ENCODE measurements at regions of chr10 and their contacts with region 1.

Region 1: DNA sequence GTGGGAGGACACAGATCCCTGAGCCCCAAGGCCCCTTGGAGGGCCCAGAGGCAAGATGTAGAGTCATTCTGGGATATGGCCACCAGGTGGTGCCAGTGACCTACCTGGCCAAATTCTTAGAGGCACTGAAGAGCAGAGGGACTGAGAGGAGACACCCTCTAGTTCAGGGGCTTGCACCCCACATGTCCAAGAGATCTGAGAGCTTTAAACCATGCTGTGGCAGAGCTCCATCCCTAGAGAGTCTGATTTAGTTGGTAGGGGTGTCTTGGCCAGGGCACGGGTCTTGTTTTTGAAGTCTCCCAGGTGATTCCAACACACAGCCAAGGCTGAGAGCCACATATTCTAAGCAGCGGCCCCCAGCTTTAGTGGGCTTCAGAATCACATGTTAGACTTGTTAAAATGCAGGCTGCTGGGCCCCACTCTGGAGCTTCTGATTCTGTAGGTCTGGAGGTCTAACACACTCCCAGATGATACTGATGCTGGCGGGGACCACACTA is 52.5 kb downstream of the PRF1 start:
- DNase-seq: peak; percentile 62
- H3K4me3 ChIP-seq: no peak overlapping the region
- H3K27ac ChIP-seq: no peak overlapping the region
- H3K4me1 ChIP-seq: peaks cover 21% of the 10 kb centered on the region
- H3K27me3 ChIP-seq: no peaks in the 10 kb centered on the region
- CTCF ChIP-seq: peak; percentile 95

Region 2: GRCh38 chr10:70664702-70665195 is 114.7 kb after region 1 on chr10:
- intact Hi-C with region 1: no loop called
- DNase-seq: no peak
- H3K4me3 ChIP-seq: no peak overlapping the region
- H3K27ac ChIP-seq: no peak overlapping the region
- H3K4me1 ChIP-seq: peaks cover 8% of the 10 kb centered on the region
- H3K27me3 ChIP-seq: no peaks in the 10 kb centered on the region
- CTCF ChIP-seq: no peak

Region 3: DNA sequence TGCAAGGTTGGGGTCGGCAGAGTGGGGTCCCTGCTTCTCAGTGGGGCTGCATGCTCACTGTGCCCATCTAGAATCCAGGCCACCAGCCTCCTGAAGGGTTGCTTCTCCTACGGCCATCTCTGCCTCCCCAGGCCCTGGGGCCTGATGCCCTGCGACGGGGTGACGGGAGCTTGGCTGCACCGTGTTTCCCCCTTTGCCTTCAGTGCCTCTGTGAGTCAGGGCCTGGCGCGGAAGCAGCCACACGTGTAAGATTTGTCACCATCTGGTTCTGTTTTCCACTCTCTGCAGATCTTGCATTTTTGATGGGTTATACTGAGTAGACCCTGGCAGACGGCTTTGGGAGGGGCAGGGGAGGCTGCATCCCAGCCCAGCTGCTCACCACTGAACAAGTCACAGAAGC is 129.5 kb after region 1 on chr10:
- intact Hi-C with region 1: no loop called
- DNase-seq: peak; percentile 58
- H3K4me3 ChIP-seq: no peak overlapping the region
- H3K27ac ChIP-seq: no peak overlapping the region
- H3K4me1 ChIP-seq: peaks cover 20% of the 10 kb centered on the region
- H3K27me3 ChIP-seq: no peaks in the 10 kb centered on the region
- CTCF ChIP-seq: no peak

Region 4: DNA sequence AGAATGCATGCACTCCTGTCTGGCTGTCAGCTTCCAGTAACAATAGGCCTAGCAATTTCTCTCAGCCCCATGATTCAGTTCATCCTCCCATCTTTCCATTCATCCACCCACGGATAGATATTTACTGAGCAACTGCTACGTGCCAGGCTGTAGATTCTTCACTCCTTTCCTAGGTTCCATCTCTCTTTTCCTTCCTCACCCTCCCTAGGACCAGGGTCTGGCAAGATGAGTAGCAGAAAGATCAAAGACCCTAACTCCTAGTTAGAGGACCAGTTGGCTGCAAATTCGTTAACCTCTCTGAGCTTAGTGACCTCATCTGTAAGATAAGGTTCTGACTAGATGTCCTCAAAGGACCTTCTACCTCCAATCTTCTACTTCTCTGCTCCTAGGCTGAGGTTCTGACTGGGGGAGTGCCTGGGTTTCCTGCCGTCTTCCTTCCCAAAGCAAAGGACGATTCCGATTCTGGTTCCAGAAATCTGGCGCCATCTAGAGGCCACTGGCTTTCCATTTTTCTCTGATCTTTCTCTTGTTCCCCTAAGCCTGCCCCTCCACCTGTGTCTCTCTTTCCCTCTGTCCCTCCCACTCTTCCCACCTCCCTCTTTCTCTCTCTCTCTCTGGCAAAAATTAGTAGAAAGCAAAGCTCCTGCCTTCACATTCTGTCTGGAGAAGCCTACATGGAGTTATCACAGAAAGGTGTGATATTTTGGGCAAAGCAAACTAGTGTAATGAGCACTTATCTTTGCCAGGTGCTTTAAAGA is 208.9 kb after region 1 on chr10:
- intact Hi-C with region 1: loop called (anchors 2 kb)
- DNase-seq: peak; percentile 53
- H3K4me3 ChIP-seq: no peak overlapping the region
- H3K27ac ChIP-seq: no peak overlapping the region
- H3K4me1 ChIP-seq: peaks cover 22% of the 10 kb centered on the region
- H3K27me3 ChIP-seq: no peaks in the 10 kb centered on the region
- CTCF ChIP-seq: peak; percentile 83

Region 5: DNA sequence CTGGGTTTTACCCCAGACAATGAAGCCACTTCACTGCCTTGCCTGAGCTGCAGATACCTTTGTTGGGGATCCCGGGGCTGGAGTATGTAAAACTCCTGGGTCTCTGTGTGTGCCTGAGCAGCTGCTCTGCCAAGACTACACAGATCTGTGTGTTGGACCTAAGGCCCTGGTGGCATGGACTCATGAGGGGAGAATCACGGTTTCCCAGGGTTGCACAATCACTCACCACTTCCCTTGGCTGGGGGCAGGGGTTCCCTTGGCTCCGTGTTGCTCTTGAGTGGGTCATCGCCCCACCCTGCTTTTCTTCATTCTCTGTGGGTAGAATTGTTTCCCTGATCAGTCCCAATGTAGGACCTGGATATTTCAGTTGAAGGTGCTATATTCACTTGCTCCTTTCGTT is 249.1 kb after region 1 on chr10:
- intact Hi-C with region 1: no loop called
- DNase-seq: no peak
- H3K4me3 ChIP-seq: no peak overlapping the region
- H3K27ac ChIP-seq: no peak overlapping the region
- H3K4me1 ChIP-seq: peaks cover 8% of the 10 kb centered on the region
- H3K27me3 ChIP-seq: peaks cover 17% of the 10 kb centered on the region
- CTCF ChIP-seq: no peak

Region 6: GRCh38 chr10:70880077-70880534 is 330.1 kb after region 1 on chr10:
- intact Hi-C with region 1: loop called (anchors 5 kb)
- DNase-seq: peak; percentile 62
- H3K4me3 ChIP-seq: no peak overlapping the region
- H3K27ac ChIP-seq: no peak overlapping the region
- H3K4me1 ChIP-seq: peaks cover 8% of the 10 kb centered on the region
- H3K27me3 ChIP-seq: no peaks in the 10 kb centered on the region
- CTCF ChIP-seq: peak; percentile 95